CD4-positive, alpha-beta memory T cell (primary cell): ENCODE measurements at regions of chr3 and their contacts with region 1.

Region 1: DNA sequence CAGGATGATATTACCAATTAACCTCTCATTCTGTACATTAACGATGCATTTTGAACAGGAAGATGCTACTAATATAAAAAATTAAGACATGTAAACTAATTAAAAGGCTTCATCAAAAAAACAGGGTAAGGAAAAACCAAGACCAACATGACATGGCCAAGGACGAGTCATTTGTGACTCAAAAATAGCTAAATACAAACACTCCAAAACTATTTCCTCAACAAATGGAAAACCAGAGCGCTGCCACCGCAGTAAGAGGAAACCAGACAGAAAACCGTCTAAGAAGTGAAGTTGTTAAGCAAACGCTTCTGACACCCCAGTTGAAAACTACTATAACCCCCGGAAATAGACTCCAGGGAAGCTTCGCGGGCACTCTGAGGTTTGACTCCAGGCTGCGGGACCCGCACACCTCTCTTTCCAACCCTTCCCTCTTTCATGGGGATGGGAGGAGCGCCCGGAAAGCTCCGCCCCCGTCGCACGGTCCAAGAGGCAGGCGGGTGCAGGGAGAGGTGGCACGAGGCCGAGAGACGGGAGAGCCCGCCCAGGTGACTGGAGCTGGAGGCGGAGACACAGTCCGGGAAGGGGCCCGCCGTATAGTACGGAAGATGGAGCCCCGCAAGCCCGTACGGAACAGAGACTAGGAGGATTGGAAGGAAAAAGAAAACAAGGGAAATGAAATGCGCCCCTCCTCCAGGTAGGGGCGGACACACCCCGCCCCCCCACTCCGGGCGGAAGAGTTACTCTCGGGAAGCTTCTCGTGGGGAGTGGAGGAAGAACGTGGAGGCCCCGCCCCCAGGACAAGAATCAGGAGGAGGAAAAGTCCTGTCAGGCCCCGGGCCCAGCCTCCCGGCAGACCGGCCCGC is 708 bp downstream of the DCAF1 start:
- DNase-seq: peak; percentile 77 to 86 (median 79)
- H3K4me3 ChIP-seq: peak overlapping the region; percentile 54 to 81
- H3K4me3 Mint-ChIP-seq: peak overlapping the region; percentile 91 to 100 (median 95)
- H3K27ac ChIP-seq: peak overlapping the region; percentile 88
- H3K27ac Mint-ChIP-seq: peak overlapping the region; percentile 93 to 99 (median 98)
- H3K4me1 ChIP-seq: peaks cover 25% of the 10 kb centered on the region
- H3K4me1 Mint-ChIP-seq: peaks cover 12 to 27% (median 14%) of the 10 kb centered on the region in 4 donors
- H3K27me3 ChIP-seq: no peaks in the 10 kb centered on the region
- H3K27me3 Mint-ChIP-seq: peaks cover 0 to 2% of the 10 kb centered on the region in 2 donors

Region 2: DNA sequence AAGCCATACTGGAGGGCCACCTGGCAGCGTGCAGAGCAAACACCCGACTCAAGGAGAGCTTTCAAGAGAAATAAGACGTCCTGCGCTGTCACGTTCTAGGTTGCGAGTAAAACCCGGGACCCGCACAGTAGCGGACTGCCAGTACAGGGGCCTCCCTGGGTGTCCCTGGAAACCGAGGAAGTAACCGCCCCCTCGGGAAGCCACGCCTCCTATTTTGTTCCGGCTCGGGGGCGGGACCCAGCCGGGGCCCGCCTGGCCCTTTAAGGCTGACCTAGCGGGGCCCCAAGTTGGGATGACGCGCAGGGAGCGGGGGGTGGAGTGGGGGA is 882.4 kb before region 1 on chr3:
- CTCF ChIA-PET with region 1: interaction called, 5 read pairs
- POLR2A ChIA-PET with region 1: interaction called, 3 read pairs
- intact Hi-C with region 1: loop called (anchors 1 kb)
- DNase-seq: peak; percentile 94 to 96 (median 94)
- H3K4me3 ChIP-seq: peak overlapping the region; percentile 75
- H3K4me3 Mint-ChIP-seq: peak overlapping the region; percentile 82 to 95 (median 90)
- H3K27ac ChIP-seq: peak overlapping the region; percentile 89
- H3K27ac Mint-ChIP-seq: peak overlapping the region; percentile 90 to 99 (median 94)
- H3K4me1 ChIP-seq: peaks cover 80% of the 10 kb centered on the region
- H3K4me1 Mint-ChIP-seq: peaks cover 50 to 81% (median 66%) of the 10 kb centered on the region in 4 donors
- H3K27me3 ChIP-seq: no peaks in the 10 kb centered on the region
- H3K27me3 Mint-ChIP-seq: no peaks in the 10 kb centered on the region

Region 3: GRCh38 chr3:51514210-51514609 is 15.1 kb after region 1 on chr3:
- CTCF ChIA-PET with region 1: interaction called, 24 read pairs
- POLR2A ChIA-PET with region 1: interaction called, 3 read pairs
- intact Hi-C with region 1: no loop called
- DNase-seq: no peak
- H3K4me3 ChIP-seq: no peak overlapping the region
- H3K4me3 Mint-ChIP-seq: no peak overlapping the region
- H3K27ac ChIP-seq: no peak overlapping the region
- H3K27ac Mint-ChIP-seq: no peak overlapping the region
- H3K4me1 ChIP-seq: no peaks in the 10 kb centered on the region
- H3K4me1 Mint-ChIP-seq: peaks cover 0 to 8% (median under 1%) of the 10 kb centered on the region in 4 donors
- H3K27me3 ChIP-seq: no peaks in the 10 kb centered on the region
- H3K27me3 Mint-ChIP-seq: no peaks in the 10 kb centered on the region

Region 4: GRCh38 chr3:51682079-51682478 is 183.0 kb after region 1 on chr3:
- CTCF ChIA-PET with region 1: interaction called, 244 read pairs
- POLR2A ChIA-PET with region 1: interaction called, 111 read pairs
- intact Hi-C with region 1: loop called (anchors 1 kb)
- DNase-seq: peak; percentile 81 to 85 (median 83)
- H3K4me3 ChIP-seq: peak overlapping the region; percentile 26 to 50
- H3K4me3 Mint-ChIP-seq: peak overlapping the region; percentile 74 to 91 (median 82)
- H3K27ac ChIP-seq: peak overlapping the region; percentile 48
- H3K27ac Mint-ChIP-seq: peak overlapping the region; percentile 57 to 97 (median 91)
- H3K4me1 ChIP-seq: peaks cover 100% of the 10 kb centered on the region
- H3K4me1 Mint-ChIP-seq: peaks cover 71 to 98% (median 90%) of the 10 kb centered on the region in 4 donors
- H3K27me3 ChIP-seq: no peaks in the 10 kb centered on the region
- H3K27me3 Mint-ChIP-seq: no peaks in the 10 kb centered on the region

Region 5: GRCh38 chr3:51995346-51996163 is 496.4 kb after region 1 on chr3 and contains the start of gene RPL29:
- CTCF ChIA-PET with region 1: no interaction called
- POLR2A ChIA-PET with region 1: no interaction called
- intact Hi-C with region 1: loop called (anchors 5 kb)
- DNase-seq: peak; percentile 91 to 94 (median 94)
- H3K4me3 ChIP-seq: peak within 1 kb of the TSS; percentile 94 to 95
- H3K4me3 Mint-ChIP-seq: peak within 1 kb of the TSS; percentile 99 to 100 (median 100)
- H3K27ac ChIP-seq: peak within 1 kb of the TSS; percentile 91
- H3K27ac Mint-ChIP-seq: peak within 1 kb of the TSS; percentile 99 to 100 (median 100)
- H3K4me1 ChIP-seq: peaks cover 30% of the 10 kb centered on the region
- H3K4me1 Mint-ChIP-seq: peaks cover 16 to 45% (median 29%) of the 10 kb centered on the region in 4 donors
- H3K27me3 ChIP-seq: no peaks in the 10 kb centered on the region
- H3K27me3 Mint-ChIP-seq: no peaks in the 10 kb centered on the region
- total RNA-seq, gene RPL29: 1,263 to 1,270 TPM

Region 6: DNA sequence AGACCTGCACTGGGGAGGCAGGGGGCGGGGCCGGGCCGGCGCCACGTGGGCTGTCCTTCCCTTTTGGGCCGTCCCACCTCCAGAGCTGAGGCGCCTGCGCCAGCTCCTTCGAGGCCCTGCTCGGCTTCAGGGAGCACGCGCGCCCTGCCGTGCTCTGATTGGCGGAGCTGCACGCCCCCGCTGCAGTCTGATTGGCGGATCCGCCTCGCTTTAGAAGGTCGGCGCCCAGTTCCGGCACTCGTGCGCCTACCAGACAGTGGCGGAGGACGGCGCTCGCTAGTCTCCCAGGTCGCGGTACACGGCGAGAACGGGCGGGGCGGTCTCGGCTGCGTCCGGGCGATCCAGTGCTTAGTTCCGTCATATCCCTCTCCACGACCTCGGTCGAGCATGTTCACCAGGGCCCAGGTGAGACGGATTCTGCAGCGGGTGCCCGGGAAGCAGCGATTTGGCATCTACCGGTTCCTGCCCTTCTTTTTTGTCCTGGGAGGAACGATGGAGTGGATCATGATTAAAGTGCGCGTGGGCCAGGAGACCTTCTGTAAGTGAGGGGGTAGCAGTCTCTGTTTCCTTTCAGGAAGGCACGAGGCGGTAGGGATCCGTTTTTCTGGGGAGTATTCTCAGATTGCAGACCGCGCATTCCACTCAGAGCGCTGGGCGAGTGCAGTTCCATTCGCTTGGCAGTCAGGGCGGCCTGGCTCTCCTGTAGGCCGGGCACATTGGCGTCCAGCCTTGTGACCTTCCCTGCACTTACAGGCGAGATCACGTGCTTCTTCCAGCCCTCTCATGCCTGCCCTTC is 1037.5 kb after region 1 on chr3 and contains the start of gene UQCC5:
- CTCF ChIA-PET with region 1: no interaction called
- POLR2A ChIA-PET with region 1: no interaction called
- intact Hi-C with region 1: loop called (anchors 2 kb)
- DNase-seq: peak; percentile 96 to 99 (median 98)
- H3K4me3 ChIP-seq: peak within 1 kb of the TSS; percentile 83 to 95
- H3K4me3 Mint-ChIP-seq: peak within 1 kb of the TSS; percentile 98 to 100 (median 100)
- H3K27ac ChIP-seq: peak within 1 kb of the TSS; percentile 74
- H3K27ac Mint-ChIP-seq: peak within 1 kb of the TSS; percentile 94 to 100 (median 99)
- H3K4me1 ChIP-seq: peaks cover 46% of the 10 kb centered on the region
- H3K4me1 Mint-ChIP-seq: peaks cover 24 to 68% (median 49%) of the 10 kb centered on the region in 4 donors
- H3K27me3 ChIP-seq: no peaks in the 10 kb centered on the region
- H3K27me3 Mint-ChIP-seq: no peaks in the 10 kb centered on the region
- total RNA-seq, gene UQCC5: 12.1 to 13.2 TPM

Region 7: GRCh38 chr3:52792961-52793695 is 1294.0 kb after region 1 on chr3:
- CTCF ChIA-PET with region 1: no interaction called
- POLR2A ChIA-PET with region 1: no interaction called
- intact Hi-C with region 1: no loop called
- DNase-seq: no peak
- H3K4me3 ChIP-seq: no peak overlapping the region
- H3K4me3 Mint-ChIP-seq: no peak overlapping the region
- H3K27ac ChIP-seq: no peak overlapping the region
- H3K27ac Mint-ChIP-seq: no peak overlapping the region
- H3K4me1 ChIP-seq: no peaks in the 10 kb centered on the region
- H3K4me1 Mint-ChIP-seq: no peaks in the 10 kb centered on the region
- H3K27me3 ChIP-seq: no peaks in the 10 kb centered on the region
- H3K27me3 Mint-ChIP-seq: peaks cover 0 to 1% of the 10 kb centered on the region in 2 donors